Posterior cingulate gyrus (tissue), 11 donors: ENCODE measurements at regions of chr14 and their contacts with region 1.

Region 1: DNA sequence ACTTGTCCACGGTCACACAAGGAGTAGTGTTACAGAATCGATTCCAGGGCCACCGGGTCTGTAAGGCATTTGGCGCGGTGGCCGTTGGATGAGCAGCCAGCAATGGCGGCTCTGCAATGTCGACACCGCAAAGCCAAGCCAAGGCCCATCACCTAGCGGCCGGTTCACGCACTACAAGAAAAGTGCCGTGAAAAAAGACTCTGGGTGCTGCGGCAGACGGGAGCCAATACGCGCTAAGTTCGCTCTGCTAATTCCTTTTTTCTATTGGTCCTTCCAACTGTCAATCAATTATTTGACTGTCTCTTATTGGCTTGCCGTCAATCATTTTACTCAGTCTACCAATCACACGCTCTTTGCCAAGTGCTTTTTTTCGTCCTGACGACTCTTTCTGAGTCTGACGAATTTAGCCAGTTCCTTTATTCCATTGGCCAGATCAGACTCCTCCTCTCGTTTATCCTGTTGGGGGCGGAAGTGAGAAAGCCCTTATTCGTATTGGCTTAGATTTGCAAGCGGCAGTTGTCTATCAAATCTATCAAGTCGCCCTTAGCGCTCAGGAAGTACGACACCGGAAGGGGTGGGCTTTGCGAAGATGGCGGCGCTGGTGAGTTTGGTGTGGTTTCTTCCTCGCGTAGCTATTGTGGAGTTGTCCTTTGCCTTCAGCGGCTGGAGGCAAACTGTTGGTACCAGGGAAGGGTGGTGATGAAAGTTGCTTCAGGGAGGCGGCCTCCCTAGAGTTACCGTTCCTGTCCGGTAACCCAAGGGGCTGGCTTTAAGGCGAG is at the start of gene NGDN:
- DNase-seq: peak; percentile 94 to 99 (median 98)

Region 2: DNA sequence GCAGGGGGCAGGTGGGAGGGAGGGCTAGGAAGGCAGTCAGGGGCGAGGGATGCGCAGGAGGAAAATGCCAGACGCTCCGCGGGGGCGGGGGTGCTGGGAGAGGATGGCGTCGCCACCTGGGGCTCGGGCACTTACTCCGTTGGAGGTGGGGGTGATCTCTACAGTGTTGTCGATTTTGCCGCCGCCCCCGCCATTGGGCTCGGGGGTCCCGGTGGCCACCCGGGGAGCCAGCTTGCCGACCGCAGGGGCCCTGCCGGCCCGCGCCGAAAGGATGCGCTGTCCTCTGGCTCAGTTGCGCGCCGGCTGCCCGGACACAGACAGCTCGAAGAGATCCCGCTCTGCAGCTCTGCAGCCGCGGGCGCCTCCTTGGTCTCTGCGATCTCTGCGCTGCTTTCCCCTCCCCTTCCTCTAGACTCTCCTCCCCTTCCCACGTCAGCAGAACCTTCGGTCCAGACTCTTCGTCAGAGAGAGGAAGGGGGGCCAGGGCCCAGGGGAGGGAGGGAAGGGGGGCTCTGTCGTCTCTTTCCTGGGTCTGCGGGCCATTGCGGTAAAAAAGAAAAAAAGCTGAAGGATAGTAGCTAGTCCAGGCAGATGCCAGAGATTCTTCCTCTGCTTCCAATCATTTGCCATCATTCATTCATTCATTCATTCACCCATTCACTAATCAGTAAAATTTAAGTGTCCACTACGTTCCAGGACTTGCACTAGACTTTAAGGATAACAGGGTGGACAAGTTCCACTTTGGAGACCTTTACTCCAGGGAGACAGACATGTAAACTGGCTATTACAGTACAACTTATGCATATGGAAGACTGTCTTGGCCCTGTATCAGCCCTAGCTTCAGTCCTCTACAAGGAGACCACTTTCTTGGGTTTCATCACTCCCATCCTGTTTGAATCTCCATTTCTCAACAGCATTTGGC is 116.5 kb before region 1 on chr14 and contains the start of gene SLC22A17:
- intact Hi-C with region 1: loop called (anchors 5 kb)
- DNase-seq: peak; percentile 85 to 99 (median 92)

Region 3: DNA sequence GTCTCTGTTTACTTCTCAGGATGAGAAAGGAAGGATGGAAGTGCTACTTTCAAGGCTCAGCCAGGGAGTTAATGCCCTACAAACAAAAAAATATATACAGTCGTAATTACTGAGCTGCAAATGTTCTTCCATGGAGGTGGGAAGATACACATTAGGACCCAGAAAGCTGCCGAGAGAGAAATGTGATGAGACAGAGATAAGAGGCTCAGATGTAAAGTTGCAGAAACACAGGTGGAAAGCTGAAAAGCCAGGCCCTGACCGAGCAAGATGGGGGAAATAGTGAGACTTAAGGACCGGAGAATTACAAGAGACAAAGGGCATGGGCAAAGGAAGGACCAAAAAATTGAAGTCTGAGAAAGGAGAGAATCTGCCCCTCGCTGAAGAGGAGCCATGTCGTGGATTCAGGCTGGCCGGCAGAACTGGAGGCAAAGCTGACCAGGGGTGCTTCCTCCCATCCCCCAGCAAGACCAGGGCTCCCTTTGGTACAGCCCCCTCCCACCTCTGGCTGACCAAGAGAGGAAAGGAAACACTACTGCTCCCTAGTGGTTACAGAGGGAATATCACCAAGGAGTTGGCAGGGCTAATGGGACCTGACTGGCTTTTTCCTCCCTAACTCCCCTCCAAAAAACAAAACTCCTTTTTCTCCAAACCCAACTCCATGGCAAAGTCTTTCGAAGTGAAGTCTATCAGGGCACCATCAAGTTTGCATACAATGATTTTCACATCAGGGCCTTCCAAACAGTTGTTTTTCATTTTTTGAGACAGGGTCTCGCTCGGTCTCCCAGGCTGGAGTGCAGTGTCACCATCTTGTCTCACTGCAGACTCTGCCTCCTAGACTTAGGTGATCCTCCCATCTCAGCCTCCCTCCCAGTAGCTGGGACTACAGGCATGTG is 70.2 kb after region 1 on chr14:
- intact Hi-C with region 1: no loop called
- DNase-seq: peak in 4 of 10 donors; percentile 43 to 88 (median 67)

Region 4: DNA sequence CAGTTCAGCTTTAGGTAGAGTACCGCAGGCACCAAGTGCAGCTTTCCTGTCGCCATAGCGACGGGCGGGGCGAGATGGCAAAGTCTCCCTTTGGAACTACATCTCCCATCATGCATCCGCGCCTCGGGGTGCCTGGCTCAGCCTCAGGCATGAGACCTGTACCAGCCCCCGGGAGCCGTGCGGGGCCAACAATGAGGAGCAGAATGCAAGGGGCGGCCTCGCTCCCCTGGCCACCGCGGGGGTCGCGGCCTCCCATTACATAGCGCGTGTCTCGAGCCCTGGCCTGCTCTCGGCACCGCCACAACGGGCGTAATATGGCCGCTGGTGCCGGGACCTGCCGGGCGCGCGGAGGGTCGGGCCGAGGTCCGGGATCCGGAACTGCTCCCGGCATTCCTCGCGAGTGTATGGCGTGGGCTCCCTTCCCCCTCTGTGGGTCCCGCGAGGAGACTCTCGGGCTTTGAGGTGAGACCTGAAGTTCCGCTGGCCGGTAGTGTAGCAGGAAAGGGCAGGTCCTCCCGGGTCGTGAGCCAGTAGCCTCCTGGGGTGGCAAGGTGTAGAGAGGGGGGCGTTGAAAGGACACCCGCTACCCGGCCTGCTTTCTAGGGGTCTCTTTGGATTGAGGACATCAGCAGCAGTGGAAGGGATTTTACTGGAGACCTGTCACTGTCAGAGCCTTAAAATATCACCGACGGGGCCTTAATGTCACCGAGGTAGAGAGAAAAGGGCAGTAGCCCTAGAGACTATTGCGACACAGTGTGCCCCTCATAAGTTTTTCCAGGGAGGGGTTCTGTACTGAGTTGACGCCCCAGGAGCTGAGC is 86.8 kb after region 1 on chr14 and contains the start of gene THTPA:
- intact Hi-C with region 1: no loop called
- DNase-seq: peak; percentile 89 to 99 (median 92)